Right cardiac atrium (tissue), 5 donors: ENCODE measurements at regions of chr5 and their contacts with region 1.

Region 1: GRCh38 chr5:154291917-154292316 is 101.4 kb downstream of the GALNT10 start:
- DNase-seq: no peak
- ATAC-seq: no peak
- H3K4me3 ChIP-seq: no peak overlapping the region
- H3K27ac ChIP-seq: no peak overlapping the region
- H3K4me1 ChIP-seq: no peaks in the 10 kb centered on the region
- H3K27me3 ChIP-seq: no peaks in the 10 kb centered on the region

Region 2: DNA sequence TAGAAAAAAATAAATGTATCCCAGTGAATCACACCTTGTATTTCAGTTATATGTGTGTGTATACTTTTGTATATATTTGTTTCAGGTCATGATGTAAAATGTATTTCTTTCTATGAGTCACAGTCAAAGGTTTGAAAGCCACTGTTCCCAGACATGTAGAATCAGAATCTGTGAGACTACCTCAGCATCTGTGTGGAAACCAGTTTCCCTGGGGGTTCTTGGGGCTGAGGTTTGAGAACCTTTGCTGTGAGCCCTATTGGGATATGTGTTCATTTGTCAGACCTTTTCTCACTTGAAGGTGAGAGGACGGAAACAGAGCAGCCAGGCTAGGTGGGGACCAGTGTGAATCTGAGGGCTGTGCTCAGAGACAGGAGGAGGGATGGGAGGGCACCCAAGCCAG is 75.2 kb after region 1 on chr5:
- intact Hi-C with region 1: loop called in 1 of 4 experiments (anchors 2 kb)
- DNase-seq: no peak
- ATAC-seq: no peak
- H3K4me3 ChIP-seq: no peak overlapping the region
- H3K27ac ChIP-seq: no peak overlapping the region
- H3K4me1 ChIP-seq: peaks cover 15% of the 10 kb centered on the region
- H3K27me3 ChIP-seq: no peaks in the 10 kb centered on the region

Region 3: GRCh38 chr5:154395407-154396258 is 103.7 kb after region 1 on chr5:
- intact Hi-C with region 1: no loop called
- DNase-seq: no peak
- ATAC-seq: no peak
- H3K4me3 ChIP-seq: no peak overlapping the region
- H3K27ac ChIP-seq: no peak overlapping the region
- H3K4me1 ChIP-seq: no peaks in the 10 kb centered on the region
- H3K27me3 ChIP-seq: no peaks in the 10 kb centered on the region